SK-N-SH (cell line): ENCODE measurements at regions of chr14 and their contacts with region 1.

Region 1: GRCh38 chr14:67599698-67600561 is at the start of gene PIGH:
- DNase-seq: peak; percentile 97
- H3K4me3 ChIP-seq: peak within 1 kb of the TSS; percentile 77 to 90
- H3K27ac ChIP-seq: peak within 1 kb of the TSS; percentile 65 to 66
- H3K4me1 ChIP-seq: peaks cover 0 to 6% of the 10 kb centered on the region in 2 experiments; a peak in 2 of 4 replicates
- H3K27me3 ChIP-seq: no peaks in the 10 kb centered on the region
- CTCF ChIP-seq: peak; percentile 58
- EP300 ChIP-seq: no peak
- RAD21 ChIP-seq: no peak; the same call in 1 of the 2 replicates
- polyA plus RNA-seq, gene PIGH: 23.6 and 26.5 TPM in 2 replicates

Region 2: GRCh38 chr14:67335781-67336180 is 264.1 kb before region 1 on chr14:
- CTCF ChIA-PET with region 1: no interaction called
- POLR2A ChIA-PET with region 1: no interaction called
- DNase-seq: peak; percentile 27
- H3K4me3 ChIP-seq: no peak overlapping the region
- H3K27ac ChIP-seq: no peak overlapping the region
- H3K4me1 ChIP-seq: no peaks in the 10 kb centered on the region; a peak in 1 of 4 replicates
- H3K27me3 ChIP-seq: no peaks in the 10 kb centered on the region
- CTCF ChIP-seq: peak; percentile 60
- EP300 ChIP-seq: no peak
- RAD21 ChIP-seq: peak; percentile 48

Region 3: GRCh38 chr14:67583711-67584644 is 16.0 kb before region 1 on chr14:
- CTCF ChIA-PET with region 1: interaction called, 12 read pairs
- POLR2A ChIA-PET with region 1: interaction called, 3 read pairs
- DNase-seq: peak; percentile 80
- H3K4me3 ChIP-seq: no peak overlapping the region; a peak in 1 of 4 replicates
- H3K27ac ChIP-seq: no peak overlapping the region
- H3K4me1 ChIP-seq: no peaks in the 10 kb centered on the region
- H3K27me3 ChIP-seq: no peaks in the 10 kb centered on the region
- CTCF ChIP-seq: peak; percentile 74
- EP300 ChIP-seq: no peak
- RAD21 ChIP-seq: peak; percentile 85

Region 4: DNA sequence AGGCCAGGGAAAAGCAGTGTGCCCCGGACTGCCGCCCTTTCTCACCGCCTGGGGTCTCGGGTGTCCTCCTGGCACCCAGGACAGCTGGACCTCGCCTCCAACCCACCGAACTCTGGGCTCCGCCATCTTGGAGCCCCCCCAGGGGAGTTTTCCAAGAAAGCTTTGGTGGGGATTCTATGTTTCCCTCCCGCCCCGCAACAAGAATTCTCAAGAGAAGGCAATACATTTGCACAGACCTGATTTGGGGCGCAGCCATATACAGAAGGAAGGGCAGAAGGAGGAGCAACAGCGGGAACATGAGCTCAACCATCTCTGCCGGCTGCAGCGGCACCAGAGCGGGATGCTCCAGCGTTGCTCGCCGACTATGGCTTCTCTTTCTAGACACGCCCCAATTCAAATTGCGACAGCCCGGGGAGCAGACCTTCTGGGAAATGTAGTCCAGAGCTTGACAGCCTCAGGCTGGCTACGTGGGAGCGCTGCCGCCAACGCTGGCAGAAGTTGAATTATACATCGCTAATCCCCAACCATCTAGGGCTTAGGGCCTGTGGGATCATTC is 95.5 kb after region 1 on chr14 and contains the start of gene RDH11:
- CTCF ChIA-PET with region 1: interaction called, 3 read pairs
- POLR2A ChIA-PET with region 1: interaction called, 11 read pairs
- DNase-seq: peak; percentile 85
- H3K4me3 ChIP-seq: peak within 1 kb of the TSS; percentile 98 to 100
- H3K27ac ChIP-seq: peak within 1 kb of the TSS; percentile 87 to 90
- H3K4me1 ChIP-seq: peaks cover 6 to 12% of the 10 kb centered on the region in 2 experiments; a peak in 2 of 4 replicates
- H3K27me3 ChIP-seq: no peaks in the 10 kb centered on the region
- CTCF ChIP-seq: no peak
- EP300 ChIP-seq: no peak
- RAD21 ChIP-seq: no peak
- polyA plus RNA-seq, gene RDH11: 44.7 and 65.8 TPM in 2 replicates